Transverse colon (tissue), 4 donors: ENCODE measurements at regions of chr1 and their contacts with region 1.

Region 1: GRCh38 chr1:156601122-156601830 is at the start of gene GPATCH4:
- DNase-seq: peak; percentile 79
- H3K4me3 ChIP-seq: peak within 1 kb of the TSS; percentile 52 to 88 (median 64)
- H3K27ac ChIP-seq: peak within 1 kb of the TSS; percentile 81 to 85 (median 83)
- H3K4me1 ChIP-seq: peaks cover 9 to 20% (median 17%) of the 10 kb centered on the region in 4 donors
- H3K27me3 ChIP-seq: no peaks in the 10 kb centered on the region
- CTCF ChIP-seq: no peak
- EP300 ChIP-seq: no peak
- POLR2A ChIP-seq: peak; percentile 42
- total RNA-seq, gene GPATCH4: 12.4 to 113 (median 28.9) TPM

Region 2: GRCh38 chr1:156383023-156383422 is 218.3 kb before region 1 on chr1:
- in situ Hi-C with region 1: loop called in 1 of 4 experiments (anchors 25 kb)
- intact Hi-C with region 1: no loop called
- DNase-seq: peak; percentile 60
- H3K4me3 ChIP-seq: no peak overlapping the region
- H3K27ac ChIP-seq: no peak overlapping the region
- H3K4me1 ChIP-seq: no peaks in the 10 kb centered on the region
- H3K27me3 ChIP-seq: peaks cover 22% of the 10 kb centered on the region
- CTCF ChIP-seq: peak; percentile 66 to 80 (median 76)
- EP300 ChIP-seq: no peak
- POLR2A ChIP-seq: no peak

Region 3: GRCh38 chr1:156456622-156457465 is 144.4 kb before region 1 on chr1:
- in situ Hi-C with region 1: loop called in 2 of 4 experiments (anchors 5 to 10 kb)
- intact Hi-C with region 1: no loop called
- DNase-seq: peak; percentile 99
- H3K4me3 ChIP-seq: peak overlapping the region; percentile 30 to 56 (median 44)
- H3K27ac ChIP-seq: peak overlapping the region; percentile 94 to 99 (median 97)
- H3K4me1 ChIP-seq: peaks cover 0 to 22% (median 14%) of the 10 kb centered on the region in 4 donors
- H3K27me3 ChIP-seq: no peaks in the 10 kb centered on the region
- CTCF ChIP-seq: peak in 1 of 5 experiments; percentile 16
- EP300 ChIP-seq: peak; percentile 97
- POLR2A ChIP-seq: peak; percentile 92

Region 4: GRCh38 chr1:156476501-156477298 is 124.6 kb before region 1 on chr1:
- in situ Hi-C with region 1: loop called in 1 of 4 experiments (anchors 10 kb)
- intact Hi-C with region 1: no loop called
- DNase-seq: no peak
- H3K4me3 ChIP-seq: no peak overlapping the region
- H3K27ac ChIP-seq: peak overlapping the region; percentile 73 to 93 (median 85)
- H3K4me1 ChIP-seq: peaks cover 34 to 56% (median 41%) of the 10 kb centered on the region in 4 donors
- H3K27me3 ChIP-seq: no peaks in the 10 kb centered on the region
- CTCF ChIP-seq: no peak
- EP300 ChIP-seq: no peak
- POLR2A ChIP-seq: no peak